AG04450 (cell line): ENCODE measurements at regions of chr5 and their contacts with region 1.

Region 1: DNA sequence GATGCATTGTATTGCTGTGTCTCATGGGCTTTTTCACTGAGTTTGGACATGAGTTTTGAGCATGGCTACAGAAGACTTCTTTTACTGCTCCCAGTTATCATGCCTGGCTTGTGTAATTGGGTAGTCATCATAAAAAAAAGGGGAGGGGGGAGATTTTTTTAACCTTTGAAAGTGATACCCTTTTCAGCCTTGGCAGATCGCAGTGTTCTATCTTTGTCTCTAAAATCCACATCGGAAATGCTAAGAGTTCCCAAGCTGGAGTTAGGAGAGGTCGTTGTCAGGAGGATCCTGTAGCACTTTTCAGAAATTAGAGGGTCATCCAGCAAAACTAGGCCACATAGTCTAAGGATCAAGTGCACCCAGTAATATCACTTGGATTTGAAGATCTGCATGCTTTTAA is 188.4 kb downstream of the WDR70 start:
- DNase-seq: no peak
- H3K4me3 ChIP-seq: no peak overlapping the region
- H3K27ac ChIP-seq: no peak overlapping the region
- H3K27me3 ChIP-seq: no peaks in the 10 kb centered on the region
- CTCF ChIP-seq: no peak

Region 2: DNA sequence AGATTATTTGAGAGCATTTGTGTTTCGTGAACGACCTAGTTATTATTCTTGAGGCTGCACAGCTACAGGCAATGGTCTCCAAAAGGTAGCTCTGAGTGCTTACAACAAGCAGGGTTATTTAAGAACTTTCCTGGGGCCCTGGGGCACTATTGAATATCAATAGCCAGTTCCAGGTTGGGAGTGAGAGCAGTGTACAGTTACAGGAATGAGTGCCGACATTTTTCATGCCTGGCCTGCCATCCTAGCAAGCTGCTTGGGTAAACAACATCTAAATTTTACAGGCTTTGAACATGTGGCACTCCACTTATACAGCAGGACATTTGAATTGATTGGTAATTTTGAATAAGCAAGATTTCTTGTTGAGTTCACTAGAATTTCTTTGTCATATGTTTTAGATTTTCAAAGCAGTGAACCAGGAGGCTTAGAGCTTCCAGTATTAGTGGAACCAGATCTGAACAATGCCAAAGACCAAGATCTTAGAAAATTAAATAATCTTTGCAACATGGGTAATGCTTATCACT is 444.2 kb after region 1 on chr5:
- CTCF ChIA-PET with region 1: no interaction called
- POLR2A ChIA-PET with region 1: interaction called, 12 read pairs
- DNase-seq: no peak
- H3K4me3 ChIP-seq: no peak overlapping the region
- H3K27ac ChIP-seq: no peak overlapping the region
- H3K27me3 ChIP-seq: peaks cover 6% of the 10 kb centered on the region
- CTCF ChIP-seq: no peak